A549 (cell line): ENCODE measurements at regions of chr16 and their contacts with region 1.

Region 1: GRCh38 chr16:22297114-22297878 is at the start of gene POLR3E:
- DNase-seq: peak; percentile 93 to 98
- ATAC-seq: peak; percentile 82 to 87
- H3K4me3 ChIP-seq: peak within 1 kb of the TSS; percentile 94
- H3K27ac ChIP-seq: peak within 1 kb of the TSS; percentile 94 to 98
- H3K4me1 ChIP-seq: peaks cover 13% of the 10 kb centered on the region; the same call in 2 of the 3 replicates
- CTCF ChIP-seq: peak; percentile 88
- EP300 ChIP-seq: no peak
- POLR2A ChIP-seq: peak; percentile 44
- RAD21 ChIP-seq: peak; percentile 93 to 98
- polyA plus RNA-seq, gene POLR3E: 77.9 and 93.0 TPM in 2 replicates

Region 2: DNA sequence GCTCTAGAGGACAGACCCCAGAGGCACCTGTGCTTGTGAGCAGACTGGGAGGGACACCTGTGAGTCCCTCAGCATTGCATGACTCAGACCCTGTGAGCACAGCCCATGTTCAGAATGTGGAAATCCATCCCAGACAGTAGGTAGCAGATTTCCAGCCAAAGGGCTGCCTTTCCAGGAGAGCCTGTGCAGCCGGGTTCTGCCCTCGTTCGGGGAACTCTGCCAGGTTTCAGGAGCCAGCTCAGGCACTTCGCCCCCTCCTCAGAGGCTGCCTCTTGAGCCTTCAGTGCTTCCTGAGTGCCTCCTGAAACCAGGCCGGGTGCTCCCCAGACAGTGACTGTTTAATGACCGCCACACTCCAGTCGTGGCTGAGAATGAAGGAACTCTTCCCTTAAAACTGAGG is 158.3 kb before region 1 on chr16:
- CTCF ChIA-PET with region 1: no interaction called
- POLR2A ChIA-PET with region 1: no interaction called
- DNase-seq: no peak
- ATAC-seq: no peak
- H3K4me3 ChIP-seq: no peak overlapping the region
- H3K27ac ChIP-seq: no peak overlapping the region
- H3K4me1 ChIP-seq: no peaks in the 10 kb centered on the region
- CTCF ChIP-seq: no peak
- EP300 ChIP-seq: no peak
- POLR2A ChIP-seq: no peak
- RAD21 ChIP-seq: no peak

Region 3: GRCh38 chr16:22161999-22162655 is 135.2 kb before region 1 on chr16 and contains the start of gene SDR42E2:
- CTCF ChIA-PET with region 1: no interaction called
- POLR2A ChIA-PET with region 1: no interaction called
- DNase-seq: peak in 1 of 2 experiments; percentile 38
- ATAC-seq: peak; percentile 63 to 72; a peak in 5 of 6 replicates
- H3K4me3 ChIP-seq: peak within 1 kb of the TSS; percentile 24; the same call in 1 of the 3 replicates
- H3K27ac ChIP-seq: no peak within 1 kb of the TSS
- H3K4me1 ChIP-seq: no peaks in the 10 kb centered on the region
- CTCF ChIP-seq: no peak
- EP300 ChIP-seq: no peak
- POLR2A ChIP-seq: no peak
- RAD21 ChIP-seq: no peak
- polyA plus RNA-seq, gene SDR42E2: not detected in 2 replicates

Region 4: DNA sequence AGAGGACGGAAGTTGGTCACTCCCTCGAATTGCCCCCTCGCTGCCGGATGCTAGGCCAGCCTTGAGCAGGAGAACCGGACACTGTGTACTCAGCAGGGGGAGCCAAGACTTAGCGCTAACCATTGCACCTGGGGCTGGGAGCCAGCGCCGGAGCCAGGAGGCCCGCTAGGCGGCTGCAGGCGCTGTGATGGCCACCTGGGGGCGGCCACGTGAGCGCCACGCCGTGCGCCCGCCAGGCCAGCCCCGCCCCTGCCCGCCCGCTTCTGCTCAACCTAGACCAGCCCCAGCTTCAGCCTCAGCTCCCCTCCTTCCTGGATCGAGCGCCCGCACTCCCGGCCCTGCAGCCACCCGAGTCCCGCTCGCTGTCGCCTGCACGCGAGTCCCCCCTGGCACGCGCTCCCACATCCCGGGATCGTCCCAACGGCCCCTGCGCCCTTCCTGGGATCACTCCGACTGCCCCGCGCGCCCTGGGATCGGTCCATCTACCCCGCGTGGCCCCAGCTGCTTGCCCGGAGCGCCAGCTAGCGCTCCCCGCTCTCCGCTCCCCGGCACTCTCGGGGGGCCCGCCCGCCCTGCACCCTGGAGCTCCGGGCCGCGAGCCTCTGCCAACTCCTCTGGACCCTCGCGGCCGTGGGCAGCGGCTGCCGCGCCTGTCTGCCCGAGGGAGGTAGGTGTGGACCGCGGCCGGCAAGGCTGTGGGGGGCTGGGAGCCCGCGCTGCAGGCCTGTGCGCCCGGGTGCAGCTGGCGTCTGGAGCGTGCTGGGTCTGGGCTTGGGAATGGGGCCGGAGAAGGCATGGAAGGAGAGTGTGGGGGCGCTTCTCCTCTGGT is 91.1 kb before region 1 on chr16 and contains the start of gene EEF2K:
- CTCF ChIA-PET with region 1: interaction called, 320 read pairs
- POLR2A ChIA-PET with region 1: interaction called, 5 read pairs
- DNase-seq: peak; percentile 98
- ATAC-seq: peak; percentile 95 to 96
- H3K4me3 ChIP-seq: peak within 1 kb of the TSS; percentile 84
- H3K27ac ChIP-seq: peak within 1 kb of the TSS; percentile 90 to 94
- H3K4me1 ChIP-seq: peaks cover 12% of the 10 kb centered on the region
- CTCF ChIP-seq: peak; percentile 87
- EP300 ChIP-seq: no peak
- POLR2A ChIP-seq: peak; percentile 49
- RAD21 ChIP-seq: peak; percentile 70 to 90
- polyA plus RNA-seq, gene EEF2K: 8.2 and 11.6 TPM in 2 replicates

Region 5: DNA sequence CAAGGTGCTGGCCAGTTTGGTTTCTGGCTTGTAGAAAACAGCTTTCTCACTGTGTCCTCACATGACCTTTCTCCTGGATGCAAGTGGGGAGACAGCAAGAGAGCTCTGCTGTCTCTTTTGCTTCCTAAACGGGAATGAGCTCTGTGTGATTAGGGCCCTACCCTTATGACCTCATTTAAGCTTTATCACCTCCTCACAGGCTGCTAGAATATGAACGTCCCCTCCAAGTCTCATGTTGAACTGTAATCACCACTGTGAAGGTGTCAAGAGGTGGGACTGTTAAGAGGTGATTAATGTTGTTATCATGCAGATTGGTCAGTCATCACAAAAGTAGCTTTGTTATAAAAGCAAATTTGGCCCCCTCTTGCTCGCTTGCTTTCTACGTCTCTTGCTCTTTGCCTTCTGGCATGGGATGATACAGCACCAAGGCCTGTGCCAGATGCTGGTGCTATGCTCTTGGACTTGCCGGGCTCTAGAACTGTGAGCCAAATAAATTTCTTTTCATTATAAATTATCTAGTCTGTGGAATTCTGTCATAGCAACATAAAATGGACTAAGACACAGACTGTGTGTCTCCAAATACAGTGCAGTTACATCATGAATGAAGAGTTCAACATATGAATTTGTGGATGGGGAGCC is 14.9 kb before region 1 on chr16:
- CTCF ChIA-PET with region 1: interaction called, 12 read pairs
- POLR2A ChIA-PET with region 1: no interaction called
- DNase-seq: no peak
- ATAC-seq: no peak
- H3K4me3 ChIP-seq: no peak overlapping the region
- H3K27ac ChIP-seq: no peak overlapping the region
- H3K4me1 ChIP-seq: no peaks in the 10 kb centered on the region
- CTCF ChIP-seq: no peak
- EP300 ChIP-seq: no peak
- POLR2A ChIP-seq: no peak
- RAD21 ChIP-seq: no peak

Region 6: DNA sequence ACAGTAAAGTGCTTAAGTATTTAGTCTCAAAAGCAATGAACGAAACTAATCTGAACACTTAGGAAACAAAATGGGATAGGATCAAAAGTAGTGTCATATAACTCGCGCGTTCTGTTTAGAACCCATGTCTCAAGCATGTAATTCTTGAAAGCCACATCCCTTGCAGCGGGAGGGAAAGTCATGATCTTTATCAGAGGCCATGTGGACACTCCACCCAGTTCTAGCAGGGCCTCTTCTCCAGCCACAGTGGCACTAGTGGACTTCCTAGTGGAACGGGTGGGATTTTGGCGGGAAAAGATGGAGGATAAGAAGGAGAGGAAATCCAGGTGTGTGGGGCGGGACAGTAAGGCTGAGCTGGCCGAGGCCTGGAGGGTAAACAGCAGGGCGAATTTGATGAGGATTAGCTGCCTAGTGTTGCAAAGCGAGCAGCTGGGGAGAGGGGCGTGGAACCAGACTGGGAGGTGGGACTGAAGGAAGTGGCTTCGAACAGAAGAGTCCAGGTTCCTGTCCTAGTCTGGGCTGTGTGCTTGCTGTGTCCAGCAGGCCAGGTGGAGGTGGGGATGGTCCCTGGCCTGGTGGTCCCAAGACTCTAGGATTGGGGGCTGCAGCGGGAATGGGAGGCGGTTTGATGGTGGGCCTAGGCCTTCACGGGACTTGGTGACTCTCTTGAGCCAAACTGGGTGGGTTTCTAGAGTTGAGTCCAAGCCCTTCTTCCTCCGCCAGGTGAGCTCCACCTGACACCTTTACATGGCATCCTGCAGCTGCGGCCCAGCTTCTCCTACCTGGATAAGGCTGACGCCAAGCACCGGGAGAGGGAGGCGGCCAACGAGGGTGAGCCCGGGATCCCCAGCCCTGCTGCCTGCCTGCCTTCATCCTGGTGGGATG is 15.8 kb after region 1 on chr16:
- CTCF ChIA-PET with region 1: interaction called, 160 read pairs
- POLR2A ChIA-PET with region 1: interaction called, 3 read pairs
- DNase-seq: no peak
- ATAC-seq: no peak
- H3K4me3 ChIP-seq: no peak overlapping the region
- H3K27ac ChIP-seq: no peak overlapping the region
- H3K4me1 ChIP-seq: no peaks in the 10 kb centered on the region
- CTCF ChIP-seq: no peak
- EP300 ChIP-seq: no peak
- POLR2A ChIP-seq: no peak
- RAD21 ChIP-seq: no peak

Region 7: DNA sequence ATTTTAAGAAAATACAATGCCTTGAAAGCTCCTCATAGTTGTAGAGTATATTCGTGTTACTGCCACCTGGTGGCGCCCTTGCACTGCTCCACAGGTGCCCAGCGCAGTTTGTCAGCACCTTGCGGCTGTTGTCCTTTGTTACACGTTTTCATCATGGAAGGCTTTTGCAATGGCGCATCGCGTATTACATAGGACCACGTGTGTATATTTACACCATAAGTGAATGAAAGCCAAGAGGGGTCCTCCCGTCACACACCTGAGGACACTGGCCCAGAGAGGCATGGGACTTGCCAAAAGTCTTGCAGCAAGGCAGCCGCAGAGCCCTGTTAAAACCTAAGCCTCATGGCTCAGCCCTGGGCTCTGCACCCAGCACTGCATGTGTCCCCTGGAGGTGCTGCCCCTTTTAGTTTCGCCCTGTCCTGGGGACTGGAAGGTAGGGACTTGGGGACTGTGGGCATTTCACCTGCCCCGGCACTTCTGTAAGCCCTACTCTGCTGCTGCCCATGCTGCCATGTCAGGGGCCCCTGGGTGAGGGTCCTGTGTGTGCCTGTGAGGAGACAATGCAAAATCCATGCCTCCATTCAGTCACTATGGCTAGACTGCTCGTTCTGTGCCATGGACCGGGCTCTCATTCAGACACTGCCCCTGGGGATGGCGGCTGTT is 24.2 kb after region 1 on chr16:
- CTCF ChIA-PET with region 1: interaction called, 160 read pairs
- POLR2A ChIA-PET with region 1: no interaction called
- DNase-seq: peak; percentile 72 to 84
- ATAC-seq: peak; percentile 61 to 81; a peak in 5 of 6 replicates
- H3K4me3 ChIP-seq: no peak overlapping the region
- H3K27ac ChIP-seq: peak overlapping the region in 1 of 2 experiments; percentile 50; a peak in 3 of 6 replicates
- H3K4me1 ChIP-seq: no peaks in the 10 kb centered on the region
- CTCF ChIP-seq: peak; percentile 96
- EP300 ChIP-seq: no peak
- POLR2A ChIP-seq: no peak
- RAD21 ChIP-seq: peak; percentile 94 to 97